Endothelial cell of umbilical vein (primary cell): ENCODE measurements at regions of chr3 and their contacts with region 1.

Region 1: DNA sequence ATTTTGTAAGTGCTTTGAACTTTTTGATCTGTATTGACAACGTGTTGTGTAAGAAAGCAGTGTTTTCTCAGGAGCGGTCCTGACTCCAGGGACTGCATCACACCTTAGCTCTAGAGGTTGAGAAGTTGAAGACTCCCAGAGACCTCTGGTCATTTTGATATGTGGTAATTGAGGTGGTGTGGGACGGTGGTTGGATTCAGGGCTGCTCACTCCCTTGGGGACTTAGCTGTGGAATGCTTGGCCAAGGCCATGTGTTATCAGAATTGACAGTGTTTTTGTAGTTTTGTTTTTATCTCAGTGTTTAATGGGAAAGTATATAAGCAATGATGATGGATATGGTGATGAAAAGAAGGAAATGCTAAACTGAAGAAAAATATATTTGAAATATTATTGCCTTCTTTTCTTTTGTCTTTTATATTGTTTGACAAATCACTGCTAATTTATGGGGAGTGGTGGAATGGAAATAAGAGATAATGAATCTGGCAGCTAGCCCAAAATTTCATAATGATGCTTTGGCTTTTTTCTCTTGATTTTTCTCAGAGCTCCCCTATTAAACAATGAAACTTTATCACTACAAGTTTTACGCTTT is 16.0 kb downstream of the CMSS1 start:
- DNase-seq: peak; percentile 87
- H3K4me3 ChIP-seq: no peak overlapping the region
- H3K27ac ChIP-seq: no peak overlapping the region
- H3K4me1 ChIP-seq: peaks cover 23% of the 10 kb centered on the region
- H3K27me3 ChIP-seq: no peaks in the 10 kb centered on the region
- CTCF ChIP-seq: no peak
- POLR2A ChIP-seq: no peak

Region 2: GRCh38 chr3:99817437-99818240 is 16.1 kb before region 1 on chr3 and contains the start of gene CMSS1:
- CTCF ChIA-PET with region 1: interaction called, 32 read pairs
- POLR2A ChIA-PET with region 1: no interaction called
- dilution Hi-C with region 1: no loop called
- intact Hi-C with region 1: no loop called
- DNase-seq: peak; percentile 95
- H3K4me3 ChIP-seq: peak within 1 kb of the TSS; percentile 38 to 85 (median 51)
- H3K27ac ChIP-seq: peak within 1 kb of the TSS; percentile 93
- H3K4me1 ChIP-seq: peaks cover 18% of the 10 kb centered on the region
- H3K27me3 ChIP-seq: no peaks in the 10 kb centered on the region
- CTCF ChIP-seq: peak; percentile 14 to 43
- POLR2A ChIP-seq: peak; percentile 56
- total RNA-seq, gene CMSS1: 60.6 and 61.9 TPM in 2 replicates

Region 3: GRCh38 chr3:100196896-100197871 is 363.5 kb after region 1 on chr3:
- CTCF ChIA-PET with region 1: no interaction called
- POLR2A ChIA-PET with region 1: no interaction called
- dilution Hi-C with region 1: no loop called
- intact Hi-C with region 1: no loop called
- DNase-seq: no peak
- H3K4me3 ChIP-seq: no peak overlapping the region
- H3K27ac ChIP-seq: no peak overlapping the region
- H3K4me1 ChIP-seq: no peaks in the 10 kb centered on the region
- H3K27me3 ChIP-seq: no peaks in the 10 kb centered on the region
- CTCF ChIP-seq: no peak
- POLR2A ChIP-seq: no peak

Region 4: GRCh38 chr3:100260685-100261484 is 427.2 kb after region 1 on chr3 and contains the start of gene TBC1D23:
- CTCF ChIA-PET with region 1: interaction called, 28 read pairs
- POLR2A ChIA-PET with region 1: no interaction called
- dilution Hi-C with region 1: no loop called
- intact Hi-C with region 1: no loop called
- DNase-seq: peak; percentile 100
- H3K4me3 ChIP-seq: peak within 1 kb of the TSS; percentile 45 to 87 (median 76)
- H3K27ac ChIP-seq: peak within 1 kb of the TSS; percentile 78
- H3K4me1 ChIP-seq: peaks cover 15% of the 10 kb centered on the region
- H3K27me3 ChIP-seq: no peaks in the 10 kb centered on the region
- CTCF ChIP-seq: peak in 1 of 2 donors; percentile 4
- POLR2A ChIP-seq: peak; percentile 76
- total RNA-seq, gene TBC1D23: 30.0 and 34.8 TPM in 2 replicates

Region 5: DNA sequence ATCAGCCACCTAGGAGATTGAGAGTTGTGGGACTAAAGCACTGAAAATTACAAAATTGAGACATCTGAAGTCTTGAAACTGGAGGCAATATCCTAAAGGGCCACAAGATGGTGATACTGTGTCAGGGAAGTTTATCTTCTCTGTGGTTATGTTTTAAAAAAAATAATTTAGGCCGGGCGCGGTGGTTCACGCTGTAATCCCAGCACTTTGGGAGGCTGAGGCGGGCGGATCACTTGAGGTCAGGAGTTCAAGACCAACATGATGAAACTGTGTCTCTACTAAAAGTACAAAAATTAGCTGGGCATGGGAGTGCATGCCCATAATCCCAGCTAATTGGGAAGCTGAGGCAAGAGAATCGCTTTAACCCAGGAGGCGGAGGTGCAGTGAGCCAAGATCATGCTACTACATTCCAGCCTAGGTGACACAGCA is 482.9 kb after region 1 on chr3:
- CTCF ChIA-PET with region 1: interaction called, 23 read pairs
- POLR2A ChIA-PET with region 1: no interaction called
- dilution Hi-C with region 1: no loop called
- intact Hi-C with region 1: loop called (anchors 5 kb)
- DNase-seq: peak; percentile 64
- H3K4me3 ChIP-seq: no peak overlapping the region
- H3K27ac ChIP-seq: no peak overlapping the region
- H3K4me1 ChIP-seq: no peaks in the 10 kb centered on the region
- H3K27me3 ChIP-seq: no peaks in the 10 kb centered on the region
- CTCF ChIP-seq: peak; percentile 46 to 48
- POLR2A ChIP-seq: no peak

Region 6: GRCh38 chr3:100590114-100590839 is 756.6 kb after region 1 on chr3:
- CTCF ChIA-PET with region 1: interaction called, 27 read pairs
- POLR2A ChIA-PET with region 1: no interaction called
- dilution Hi-C with region 1: no loop called
- intact Hi-C with region 1: loop called (anchors 1 kb)
- DNase-seq: peak; percentile 80
- H3K4me3 ChIP-seq: peak overlapping the region in 1 of 3 experiments; percentile 44
- H3K27ac ChIP-seq: no peak overlapping the region
- H3K4me1 ChIP-seq: peaks cover 3% of the 10 kb centered on the region
- H3K27me3 ChIP-seq: peaks cover 0 to 2% of the 10 kb centered on the region in 2 experiments
- CTCF ChIP-seq: peak; percentile 68 to 76
- POLR2A ChIP-seq: no peak